ENCODE measurements at regions of chr16 and their contacts with region 1.

Region 1: DNA sequence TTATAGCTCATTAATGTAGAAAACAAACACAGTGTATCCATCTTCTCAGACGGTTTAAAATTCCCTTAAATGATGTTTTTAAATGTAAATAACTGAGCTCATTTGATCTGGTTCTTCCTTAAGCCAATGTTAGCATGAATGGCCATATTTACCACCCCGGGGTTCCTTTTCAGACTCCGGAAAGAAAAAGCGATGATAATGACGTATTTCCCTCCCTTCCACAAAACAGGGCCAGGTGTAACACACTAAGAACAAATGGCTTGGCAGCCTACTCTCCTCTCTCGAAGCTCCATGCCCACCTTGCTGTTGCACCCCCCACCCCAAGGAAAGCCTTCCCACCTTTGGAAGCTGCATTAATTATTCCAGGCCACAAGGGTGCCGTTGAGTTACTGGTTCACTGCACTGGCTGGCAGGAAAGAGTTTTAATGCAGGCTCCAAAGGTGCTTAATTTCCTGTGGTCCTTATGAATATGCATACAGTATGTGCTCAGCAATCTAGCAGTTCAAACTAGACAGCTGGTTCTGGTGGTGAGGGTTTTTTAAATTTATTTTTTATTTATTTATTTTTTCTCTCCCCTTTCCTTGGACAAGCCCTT is 378.9 kb downstream of the WWOX start:
- DNase-seq: peak in 3 of 9 experiments; percentile 12 to 48 (median 24)
- ATAC-seq: no peak
- H3K4me3 ChIP-seq: no peak overlapping the region
- H3K4me3 Mint-ChIP-seq: no peak overlapping the region
- H3K27ac ChIP-seq: no peak overlapping the region
- H3K27ac Mint-ChIP-seq: no peak overlapping the region
- H3K4me1 ChIP-seq: no peaks in the 10 kb centered on the region
- H3K4me1 Mint-ChIP-seq: no peaks in the 10 kb centered on the region
- H3K27me3 ChIP-seq: no peaks in the 10 kb centered on the region
- H3K27me3 Mint-ChIP-seq: no peaks in the 10 kb centered on the region
- CTCF ChIP-seq: no peak

Region 2: GRCh38 chr16:78607486-78607885 is 129.1 kb after region 1 on chr16:
- CTCF ChIA-PET with region 1: no interaction called
- POLR2A ChIA-PET with region 1: no interaction called
- intact Hi-C with region 1: loop called in 1 of 2 experiments (anchors 5 kb)
- DNase-seq: no peak
- ATAC-seq: no peak
- H3K4me3 ChIP-seq: no peak overlapping the region
- H3K4me3 Mint-ChIP-seq: no peak overlapping the region
- H3K27ac ChIP-seq: no peak overlapping the region
- H3K27ac Mint-ChIP-seq: no peak overlapping the region
- H3K4me1 ChIP-seq: no peaks in the 10 kb centered on the region
- H3K4me1 Mint-ChIP-seq: peaks cover 7% of the 10 kb centered on the region
- H3K27me3 ChIP-seq: no peaks in the 10 kb centered on the region
- H3K27me3 Mint-ChIP-seq: no peaks in the 10 kb centered on the region
- CTCF ChIP-seq: no peak

Region 3: DNA sequence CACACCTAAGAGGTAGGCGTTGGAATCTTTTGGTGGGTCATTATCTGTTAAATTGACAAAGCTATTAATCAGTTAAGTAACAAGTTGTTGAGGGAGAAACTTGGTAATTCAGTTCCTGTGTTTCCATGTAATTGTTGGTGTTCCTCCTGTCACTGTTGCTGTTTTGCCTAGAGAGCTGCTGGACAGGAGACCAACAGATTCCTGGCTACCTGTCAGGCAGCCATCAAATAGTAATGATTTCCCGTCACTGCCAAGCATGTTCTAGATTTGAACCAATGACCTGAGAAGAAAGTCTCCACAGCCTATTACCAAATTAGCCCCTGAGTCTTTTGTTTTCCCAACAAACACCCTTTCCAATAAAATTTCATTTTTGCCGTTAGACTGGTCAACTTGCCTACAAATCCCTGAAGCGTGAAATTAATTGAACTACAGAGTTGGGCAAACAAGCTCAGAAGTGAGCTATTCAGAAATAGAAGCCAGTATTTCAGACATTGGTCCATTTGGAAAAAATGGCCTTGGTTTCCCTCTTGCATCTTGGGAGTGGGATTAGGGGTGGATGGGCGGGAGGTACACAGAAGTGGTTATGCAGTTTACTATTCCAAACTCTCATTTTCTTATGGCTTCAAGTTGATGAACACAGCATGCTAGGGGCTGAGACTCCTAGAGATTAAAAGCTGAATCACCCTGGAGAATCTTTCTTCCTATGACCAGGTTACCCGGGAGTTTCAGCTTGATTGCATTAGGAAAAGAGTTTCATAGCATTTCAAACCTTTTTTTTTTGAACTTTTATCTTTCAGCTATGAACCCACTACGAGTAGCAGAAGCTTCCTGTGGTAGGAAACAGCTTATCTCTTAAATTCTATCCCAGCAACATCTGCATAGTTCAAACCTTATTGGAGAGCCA is 1385.0 kb after region 1 on chr16:
- CTCF ChIA-PET with region 1: no interaction called
- POLR2A ChIA-PET with region 1: no interaction called
- intact Hi-C with region 1: no loop called
- DNase-seq: no peak
- ATAC-seq: no peak
- H3K4me3 ChIP-seq: no peak overlapping the region
- H3K4me3 Mint-ChIP-seq: no peak overlapping the region
- H3K27ac ChIP-seq: no peak overlapping the region
- H3K27ac Mint-ChIP-seq: no peak overlapping the region
- H3K4me1 ChIP-seq: no peaks in the 10 kb centered on the region
- H3K4me1 Mint-ChIP-seq: no peaks in the 10 kb centered on the region
- H3K27me3 ChIP-seq: no peaks in the 10 kb centered on the region
- H3K27me3 Mint-ChIP-seq: no peaks in the 10 kb centered on the region
- CTCF ChIP-seq: no peak

Measured in CD8-positive, alpha-beta T cell (primary cell).